ENCODE measurements at regions of chr11 and their contacts with region 1.

Region 1: DNA sequence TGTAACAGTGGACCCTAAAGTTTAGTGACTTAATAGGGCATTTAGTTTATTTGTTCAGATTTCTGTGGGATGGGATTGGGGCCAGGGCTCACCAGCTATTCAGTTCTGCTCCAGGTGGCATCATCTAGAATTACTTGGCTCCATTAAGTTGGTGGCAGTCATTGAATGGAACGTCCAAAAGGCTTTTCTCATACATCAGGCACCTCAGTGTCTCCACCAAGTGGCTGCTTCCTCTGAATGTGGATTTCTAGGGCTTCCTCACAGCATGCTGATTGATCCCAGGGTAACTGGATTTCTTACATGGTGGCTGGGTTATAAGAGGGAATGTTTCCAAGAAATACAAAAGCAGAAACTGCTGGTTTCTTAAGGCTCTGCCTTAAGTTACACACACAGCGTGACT is 34.7 kb downstream of the USP47 start:
- DNase-seq: peak; percentile 18
- H3K4me3 Mint-ChIP-seq: no peak overlapping the region
- H3K27ac Mint-ChIP-seq: no peak overlapping the region
- H3K4me1 Mint-ChIP-seq: peaks cover 31% of the 10 kb centered on the region
- H3K27me3 Mint-ChIP-seq: no peaks in the 10 kb centered on the region
- CTCF ChIP-seq: peak; percentile 10

Region 2: DNA sequence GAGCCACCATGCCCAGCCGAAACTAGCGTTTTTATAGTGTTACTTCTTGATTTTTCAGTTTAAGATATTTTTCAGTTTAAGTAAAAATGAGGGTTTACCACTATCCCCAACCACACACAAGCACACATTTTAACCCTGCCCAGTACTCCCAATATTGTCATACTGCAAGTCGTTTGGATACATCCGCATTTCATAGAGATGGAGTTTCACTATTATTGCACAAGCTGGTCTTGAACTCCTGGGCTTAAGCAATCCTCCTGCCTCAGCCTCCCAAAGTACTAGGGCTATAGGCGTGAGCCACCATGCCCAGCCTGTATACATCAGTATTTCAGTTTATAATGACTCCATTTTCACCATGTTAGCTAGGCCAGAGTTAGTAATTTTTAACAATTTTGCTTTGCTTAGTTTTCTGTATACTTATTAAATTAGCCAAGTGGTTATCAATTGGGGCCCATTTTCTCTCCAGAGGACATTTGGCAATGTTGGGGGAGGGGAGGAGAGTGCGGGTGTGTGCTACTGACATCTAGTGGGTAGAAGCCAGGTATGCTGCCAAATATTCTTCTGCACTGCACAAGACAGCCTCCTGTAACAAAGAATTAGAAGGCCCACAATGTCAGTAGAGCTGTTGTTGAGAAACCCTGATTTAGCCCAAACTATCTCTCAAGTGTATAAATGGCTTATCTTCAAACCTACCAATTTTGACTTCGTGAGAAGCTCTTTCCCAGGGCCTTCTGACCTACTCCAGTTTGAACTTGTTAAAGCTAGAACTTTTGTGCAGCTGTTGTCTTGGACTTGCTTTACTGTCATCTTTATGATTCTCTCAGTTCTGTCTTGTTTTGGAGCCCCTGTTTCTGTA is 27.3 kb before region 1 on chr11:
- CTCF ChIA-PET with region 1: interaction called, 13 read pairs
- POLR2A ChIA-PET with region 1: interaction called, 10 read pairs
- intact Hi-C with region 1: no loop called
- DNase-seq: peak; percentile 84
- H3K4me3 Mint-ChIP-seq: no peak overlapping the region
- H3K27ac Mint-ChIP-seq: peak overlapping the region; percentile 57
- H3K4me1 Mint-ChIP-seq: peaks cover 44% of the 10 kb centered on the region
- H3K27me3 Mint-ChIP-seq: no peaks in the 10 kb centered on the region
- CTCF ChIP-seq: peak; percentile 73

Measured in MCF 10A (cell line).